Endothelial cell of umbilical vein (primary cell): ENCODE measurements at regions of chr2 and their contacts with region 1.

Region 1: DNA sequence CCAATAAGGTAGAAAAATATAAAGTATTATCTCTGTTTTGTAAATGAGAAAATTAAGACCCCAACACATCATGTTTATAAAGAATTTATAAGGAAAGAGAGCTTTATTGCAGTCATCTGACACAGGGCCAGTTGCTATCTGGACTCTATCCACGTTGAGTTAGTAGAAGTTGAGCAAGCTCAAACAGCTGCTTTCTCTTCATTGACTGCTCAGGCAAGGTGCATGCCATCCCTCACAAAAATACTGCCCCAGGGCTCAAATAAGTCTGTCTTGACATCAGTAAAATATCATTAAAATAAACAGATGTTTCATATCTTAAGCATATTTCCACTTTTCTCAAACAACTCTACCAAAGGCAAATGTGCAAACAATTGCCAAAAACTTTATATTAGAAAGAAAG is 14.8 kb downstream of the COL5A2 start:
- DNase-seq: no peak
- H3K4me3 ChIP-seq: no peak overlapping the region
- H3K27ac ChIP-seq: no peak overlapping the region
- H3K4me1 ChIP-seq: peaks cover 14% of the 10 kb centered on the region
- H3K27me3 ChIP-seq: no peaks in the 10 kb centered on the region
- CTCF ChIP-seq: no peak
- POLR2A ChIP-seq: no peak

Region 2: DNA sequence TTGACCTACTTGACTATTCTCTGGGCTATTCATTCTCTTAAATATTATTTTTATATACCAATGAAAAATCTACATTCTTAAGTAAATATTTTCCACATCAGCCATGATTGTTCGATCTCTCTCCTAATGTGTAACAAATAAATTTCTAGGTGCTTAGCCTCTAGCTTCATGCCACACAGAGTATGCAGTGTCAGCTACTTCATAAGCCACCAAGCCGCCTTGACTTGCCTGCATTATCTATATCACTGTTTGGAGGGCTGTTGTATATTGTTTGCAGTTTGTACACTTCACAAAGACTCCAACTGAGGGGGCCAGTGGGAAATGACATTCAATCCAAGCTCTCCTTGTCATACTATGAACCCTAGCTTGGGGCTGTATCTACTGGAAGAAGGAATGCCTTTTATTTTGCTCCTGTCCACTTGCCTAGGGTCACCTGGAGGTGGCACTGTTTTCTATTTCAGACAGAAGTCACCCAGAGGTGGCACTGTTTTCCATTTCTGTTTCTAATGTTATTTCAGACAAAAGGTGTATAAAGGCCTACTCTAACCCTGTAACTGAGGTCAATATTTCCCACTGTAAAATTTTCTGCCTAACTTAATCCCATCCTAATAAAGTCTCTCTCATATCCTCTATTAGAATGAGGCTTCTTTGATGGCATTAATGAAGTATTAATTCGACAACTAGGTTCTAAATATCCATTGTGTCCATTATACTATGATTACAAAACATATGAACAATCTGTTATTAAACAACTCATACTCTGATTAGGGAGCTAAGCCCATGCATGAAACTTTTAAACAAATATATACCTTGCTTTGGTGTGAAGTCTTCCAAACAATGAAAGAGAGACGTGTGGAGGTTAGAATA is 21.6 kb before region 1 on chr2:
- CTCF ChIA-PET with region 1: interaction called, 12 read pairs
- POLR2A ChIA-PET with region 1: no interaction called
- dilution Hi-C with region 1: no loop called
- intact Hi-C with region 1: no loop called
- DNase-seq: peak; percentile 49
- H3K4me3 ChIP-seq: no peak overlapping the region
- H3K27ac ChIP-seq: no peak overlapping the region
- H3K4me1 ChIP-seq: no peaks in the 10 kb centered on the region
- H3K27me3 ChIP-seq: no peaks in the 10 kb centered on the region
- CTCF ChIP-seq: peak; percentile 69 to 88
- POLR2A ChIP-seq: no peak